SK-N-SH (cell line): ENCODE measurements at regions of chr2 and their contacts with region 1.

Region 1: DNA sequence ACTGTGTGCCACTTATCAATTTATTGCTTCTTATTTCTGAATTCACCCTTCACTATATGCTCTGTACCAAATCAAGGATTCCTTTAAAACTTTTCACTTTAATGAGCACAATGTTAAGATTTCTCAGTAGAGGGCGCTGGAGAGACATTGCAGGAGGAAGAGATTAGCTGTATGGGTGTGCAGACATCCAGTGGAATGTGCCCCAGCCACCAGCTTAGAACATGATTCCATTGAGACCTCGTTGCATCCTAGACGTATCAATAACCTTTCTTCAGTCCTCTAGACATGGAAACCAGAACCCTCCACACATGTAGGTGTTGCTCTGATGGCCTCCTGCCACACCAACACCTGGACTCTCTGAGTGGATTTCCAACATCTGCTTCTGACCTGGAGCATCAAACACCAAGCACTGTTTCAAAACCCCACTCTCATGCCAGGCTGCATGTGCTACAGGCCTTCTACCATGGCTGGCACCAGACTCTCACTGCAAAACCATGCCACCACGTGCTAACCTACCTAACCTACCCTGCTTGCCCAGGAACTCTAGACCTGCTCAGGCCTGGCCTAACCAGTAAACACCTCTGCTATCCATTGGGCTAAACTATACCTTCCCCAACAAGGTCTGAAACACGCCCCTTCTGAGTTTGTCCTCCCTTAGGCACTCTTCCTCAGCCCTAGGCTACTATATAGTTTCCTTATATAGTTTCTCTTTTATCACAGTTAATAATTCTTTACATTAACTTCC is 633.2 kb upstream of the PKDCC start:
- DNase-seq: peak; percentile 27
- H3K4me3 ChIP-seq: no peak overlapping the region
- H3K27ac ChIP-seq: no peak overlapping the region
- H3K4me1 ChIP-seq: no peaks in the 10 kb centered on the region
- H3K27me3 ChIP-seq: no peaks in the 10 kb centered on the region
- CTCF ChIP-seq: peak; percentile 73
- EP300 ChIP-seq: no peak
- RAD21 ChIP-seq: peak; percentile 85

Region 2: GRCh38 chr2:41222628-41223027 is 192.0 kb before region 1 on chr2:
- CTCF ChIA-PET with region 1: no interaction called
- POLR2A ChIA-PET with region 1: no interaction called
- DNase-seq: no peak
- H3K4me3 ChIP-seq: no peak overlapping the region
- H3K27ac ChIP-seq: no peak overlapping the region
- H3K4me1 ChIP-seq: no peaks in the 10 kb centered on the region
- H3K27me3 ChIP-seq: no peaks in the 10 kb centered on the region
- CTCF ChIP-seq: no peak
- EP300 ChIP-seq: no peak
- RAD21 ChIP-seq: no peak

Region 3: GRCh38 chr2:41400088-41400665 is 14.5 kb before region 1 on chr2:
- CTCF ChIA-PET with region 1: interaction called, 18 read pairs
- POLR2A ChIA-PET with region 1: no interaction called
- DNase-seq: peak; percentile 36
- H3K4me3 ChIP-seq: no peak overlapping the region
- H3K27ac ChIP-seq: no peak overlapping the region
- H3K4me1 ChIP-seq: no peaks in the 10 kb centered on the region
- H3K27me3 ChIP-seq: no peaks in the 10 kb centered on the region
- CTCF ChIP-seq: peak; percentile 51
- EP300 ChIP-seq: no peak
- RAD21 ChIP-seq: peak; percentile 80

Region 4: GRCh38 chr2:41431756-41432155 is 17.1 kb after region 1 on chr2:
- CTCF ChIA-PET with region 1: interaction called, 17 read pairs
- POLR2A ChIA-PET with region 1: no interaction called
- DNase-seq: peak; percentile 4
- H3K4me3 ChIP-seq: no peak overlapping the region
- H3K27ac ChIP-seq: no peak overlapping the region
- H3K4me1 ChIP-seq: no peaks in the 10 kb centered on the region; a peak in 1 of 4 replicates
- H3K27me3 ChIP-seq: no peaks in the 10 kb centered on the region
- CTCF ChIP-seq: no peak
- EP300 ChIP-seq: no peak
- RAD21 ChIP-seq: no peak

Region 5: GRCh38 chr2:41579806-41580205 is 165.1 kb after region 1 on chr2:
- CTCF ChIA-PET with region 1: no interaction called
- POLR2A ChIA-PET with region 1: no interaction called
- DNase-seq: no peak
- H3K4me3 ChIP-seq: no peak overlapping the region
- H3K27ac ChIP-seq: no peak overlapping the region
- H3K4me1 ChIP-seq: peaks cover 0 to 2% of the 10 kb centered on the region in 2 experiments; a peak in 1 of 4 replicates
- H3K27me3 ChIP-seq: no peaks in the 10 kb centered on the region
- CTCF ChIP-seq: no peak
- EP300 ChIP-seq: no peak
- RAD21 ChIP-seq: no peak

Region 6: GRCh38 chr2:41782306-41783158 is 367.9 kb after region 1 on chr2:
- CTCF ChIA-PET with region 1: interaction called, 12 read pairs
- POLR2A ChIA-PET with region 1: no interaction called
- DNase-seq: peak; percentile 55
- H3K4me3 ChIP-seq: peak overlapping the region in 1 of 2 experiments; percentile 32; a peak in 1 of 4 replicates
- H3K27ac ChIP-seq: no peak overlapping the region
- H3K4me1 ChIP-seq: no peaks in the 10 kb centered on the region; a peak in 2 of 4 replicates
- H3K27me3 ChIP-seq: no peaks in the 10 kb centered on the region
- CTCF ChIP-seq: peak; percentile 98
- EP300 ChIP-seq: no peak
- RAD21 ChIP-seq: peak; percentile 99

Region 7: DNA sequence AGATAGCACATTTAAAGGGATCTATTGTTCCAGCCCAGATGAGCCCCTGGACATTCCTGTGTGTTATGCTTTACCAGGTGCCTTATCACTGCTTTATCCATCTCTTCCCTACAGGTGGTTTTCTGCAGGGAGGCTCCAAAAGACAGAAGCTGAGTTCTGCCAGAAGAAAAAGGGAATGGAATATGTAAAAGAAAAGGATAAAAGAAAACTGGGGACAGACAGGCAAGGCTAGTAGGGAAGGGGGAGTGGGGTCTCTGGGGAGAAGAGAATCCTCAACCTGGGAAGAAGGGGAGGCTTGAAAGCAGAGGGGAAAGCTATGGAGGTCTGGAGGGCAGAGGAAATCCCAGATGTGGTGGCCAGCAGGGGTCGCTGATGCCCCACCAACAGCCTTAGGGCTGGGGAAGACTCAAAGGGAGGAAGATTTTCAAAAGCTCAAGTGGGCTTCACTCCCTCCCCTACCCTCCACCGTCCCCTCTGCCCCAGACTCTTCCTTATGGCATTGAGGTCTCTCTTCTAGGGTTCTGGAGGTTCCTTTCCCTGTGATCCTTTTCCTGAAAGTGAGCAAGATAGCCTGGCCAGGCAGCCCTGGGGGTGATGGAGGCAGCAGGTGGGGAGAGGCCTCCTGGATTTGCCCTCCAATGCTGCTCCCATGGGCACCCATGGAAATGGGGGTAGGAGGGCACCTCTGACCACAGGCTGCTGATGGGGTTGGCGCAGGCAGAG is 455.0 kb after region 1 on chr2:
- CTCF ChIA-PET with region 1: no interaction called
- POLR2A ChIA-PET with region 1: no interaction called
- DNase-seq: peak; percentile 86
- H3K4me3 ChIP-seq: no peak overlapping the region; a peak in 1 of 4 replicates
- H3K27ac ChIP-seq: peak overlapping the region in 1 of 2 experiments; percentile 39; a peak in 1 of 4 replicates
- H3K4me1 ChIP-seq: peaks cover 0 to 26% of the 10 kb centered on the region in 2 experiments; a peak in 3 of 4 replicates
- H3K27me3 ChIP-seq: no peaks in the 10 kb centered on the region
- CTCF ChIP-seq: peak; percentile 91
- EP300 ChIP-seq: 0 out of 4 replicates have a peak, but pooled peaks of 1 of the 2 experiments have one; percentile 16
- RAD21 ChIP-seq: peak; percentile 100